ENCODE measurements at regions of chr13 and their contacts with region 1.

Region 1: GRCh38 chr13:63307228-63307627 is 1891.6 kb upstream of the PCDH20 start:
- DNase-seq: no peak
- ATAC-seq: no peak
- H3K4me3 ChIP-seq: no peak overlapping the region
- H3K27ac ChIP-seq: no peak overlapping the region
- H3K4me1 ChIP-seq: no peaks in the 10 kb centered on the region
- H3K27me3 ChIP-seq: no peaks in the 10 kb centered on the region
- CTCF ChIP-seq: no peak

Region 2: DNA sequence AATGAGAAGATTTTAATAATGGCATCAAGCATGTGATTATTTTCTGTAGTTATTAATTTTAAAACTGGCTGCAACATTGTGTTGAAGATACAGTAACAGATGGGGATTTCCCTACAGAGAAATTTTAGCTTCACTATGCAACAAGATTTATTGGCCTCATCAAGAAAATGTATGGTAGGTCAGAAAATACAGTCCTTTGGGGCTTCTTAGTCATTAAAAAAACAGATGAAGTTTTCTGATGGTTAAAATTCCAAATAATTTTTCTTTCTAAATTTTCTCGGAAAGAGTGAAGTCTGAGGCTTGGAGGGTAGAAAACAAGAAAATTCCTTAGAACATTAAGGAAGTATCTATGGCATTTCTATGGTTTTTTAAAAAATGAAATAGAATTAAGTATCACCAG is 100.8 kb before region 1 on chr13:
- intact Hi-C with region 1: no loop called
- DNase-seq: no peak
- ATAC-seq: no peak
- H3K4me3 ChIP-seq: no peak overlapping the region
- H3K27ac ChIP-seq: no peak overlapping the region
- H3K4me1 ChIP-seq: no peaks in the 10 kb centered on the region
- H3K27me3 ChIP-seq: no peaks in the 10 kb centered on the region
- CTCF ChIP-seq: no peak

Region 3: DNA sequence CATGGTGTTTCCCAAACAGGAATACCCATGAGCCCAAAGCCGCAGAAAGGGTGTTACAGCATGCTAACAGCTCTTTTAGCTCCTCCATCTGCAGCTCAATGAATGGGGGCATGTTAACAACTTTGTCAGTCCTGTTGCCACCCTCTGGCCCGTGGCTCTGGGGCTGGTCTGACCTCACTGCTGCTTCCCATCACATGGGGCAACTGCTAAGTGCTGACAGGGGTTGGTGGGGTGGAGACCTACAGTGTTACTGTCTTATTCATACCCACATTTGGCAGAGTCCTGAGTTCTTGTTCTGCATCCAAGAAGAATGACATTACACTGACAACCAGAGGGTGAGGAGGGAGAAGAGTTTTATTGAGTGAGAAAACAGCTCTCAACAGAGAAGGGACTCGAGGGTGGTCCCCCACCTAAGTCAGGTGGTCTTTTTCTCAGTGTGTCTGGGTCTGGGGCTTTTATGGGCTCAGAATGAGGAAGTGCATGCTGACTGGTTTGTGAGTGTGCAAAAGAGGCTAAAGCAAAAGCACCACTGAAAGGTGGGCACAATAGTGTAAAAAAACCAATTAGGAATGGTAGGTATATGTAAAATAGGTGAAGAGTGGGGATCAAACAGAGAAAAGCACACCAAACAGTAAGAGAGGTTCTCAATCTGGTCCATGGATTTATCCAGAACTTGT is 60.4 kb after region 1 on chr13:
- intact Hi-C with region 1: loop called in 1 of 10 experiments (anchors 10 kb)
- DNase-seq: no peak
- ATAC-seq: no peak
- H3K4me3 ChIP-seq: no peak overlapping the region
- H3K27ac ChIP-seq: no peak overlapping the region
- H3K4me1 ChIP-seq: no peaks in the 10 kb centered on the region
- H3K27me3 ChIP-seq: no peaks in the 10 kb centered on the region
- CTCF ChIP-seq: no peak

Measured in heart right ventricle (tissue), 16 donors.